ENCODE measurements at regions of chr3 and their contacts with region 1.

Region 1: DNA sequence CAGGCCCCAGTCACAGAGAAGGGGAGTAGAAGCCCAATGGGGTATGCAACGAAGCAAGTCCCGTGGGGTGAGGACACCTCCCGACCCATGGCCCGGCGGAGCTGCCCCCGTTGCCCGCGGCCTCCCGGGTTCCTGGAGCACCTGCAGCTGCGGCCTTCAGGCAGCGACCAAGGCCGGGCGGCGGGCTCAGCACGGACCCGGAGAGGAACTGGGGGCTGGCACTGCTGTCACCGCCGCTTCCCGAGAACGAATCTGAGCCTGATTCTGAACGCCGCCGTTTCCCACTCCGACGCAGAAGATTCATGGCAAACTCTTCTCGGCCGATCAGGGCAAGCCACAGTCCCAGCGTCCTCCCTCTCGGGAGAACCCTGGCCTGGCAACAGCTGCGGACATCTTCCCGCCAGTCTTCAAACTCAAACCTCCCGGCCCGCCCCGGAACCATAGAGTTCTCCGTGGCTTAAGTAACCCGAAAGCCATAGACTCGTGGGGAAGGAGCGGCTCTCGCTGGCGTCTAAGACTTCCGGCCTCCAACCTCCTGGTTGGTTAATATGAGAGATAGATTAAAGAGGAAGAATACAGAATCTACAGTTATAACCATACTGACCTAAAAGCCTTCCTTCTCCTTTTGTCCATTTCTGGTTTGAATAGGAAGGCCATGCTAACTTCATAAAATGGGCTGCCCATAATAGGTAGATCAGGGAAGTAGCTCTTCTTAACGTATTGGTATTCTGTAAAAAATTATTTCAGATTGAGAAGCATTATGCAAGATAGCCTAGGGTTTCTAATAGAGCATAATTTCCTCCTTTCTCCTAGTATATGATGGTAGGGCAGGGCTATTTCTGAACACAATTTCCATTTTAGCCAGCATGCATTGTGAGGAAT is at the start of gene POLQ:
- DNase-seq: peak; percentile 83
- ATAC-seq: peak; percentile 94
- H3K4me3 Mint-ChIP-seq: peak within 1 kb of the TSS; percentile 98
- H3K27ac Mint-ChIP-seq: peak within 1 kb of the TSS; percentile 94
- H3K4me1 Mint-ChIP-seq: peaks cover 20% of the 10 kb centered on the region
- H3K27me3 Mint-ChIP-seq: no peaks in the 10 kb centered on the region
- CTCF ChIP-seq: no peak
- total RNA-seq, gene POLQ: 14.9 to 16.8 TPM (median 16.2 TPM) in 3 replicates

Region 2: GRCh38 chr3:121431726-121432517 is 113.9 kb before region 1 on chr3:
- CTCF ChIA-PET with region 1: no interaction called
- POLR2A ChIA-PET with region 1: no interaction called
- DNase-seq: no peak
- ATAC-seq: no peak
- H3K4me3 Mint-ChIP-seq: no peak overlapping the region
- H3K27ac Mint-ChIP-seq: no peak overlapping the region
- H3K4me1 Mint-ChIP-seq: no peaks in the 10 kb centered on the region
- H3K27me3 Mint-ChIP-seq: no peaks in the 10 kb centered on the region
- CTCF ChIP-seq: no peak

Region 3: GRCh38 chr3:121592856-121593702 is 47.3 kb after region 1 on chr3 and contains the start of gene FBXO40:
- CTCF ChIA-PET with region 1: interaction called, 18 read pairs
- POLR2A ChIA-PET with region 1: interaction called, 3 read pairs
- DNase-seq: peak; percentile 88
- ATAC-seq: peak; percentile 96
- H3K4me3 Mint-ChIP-seq: peak within 1 kb of the TSS; percentile 45
- H3K27ac Mint-ChIP-seq: peak within 1 kb of the TSS; percentile 100
- H3K4me1 Mint-ChIP-seq: peaks cover 69% of the 10 kb centered on the region
- H3K27me3 Mint-ChIP-seq: no peaks in the 10 kb centered on the region
- CTCF ChIP-seq: no peak
- total RNA-seq, gene FBXO40: 0.04 to 0.09 TPM (median 0.07 TPM) in 3 replicates

Region 4: DNA sequence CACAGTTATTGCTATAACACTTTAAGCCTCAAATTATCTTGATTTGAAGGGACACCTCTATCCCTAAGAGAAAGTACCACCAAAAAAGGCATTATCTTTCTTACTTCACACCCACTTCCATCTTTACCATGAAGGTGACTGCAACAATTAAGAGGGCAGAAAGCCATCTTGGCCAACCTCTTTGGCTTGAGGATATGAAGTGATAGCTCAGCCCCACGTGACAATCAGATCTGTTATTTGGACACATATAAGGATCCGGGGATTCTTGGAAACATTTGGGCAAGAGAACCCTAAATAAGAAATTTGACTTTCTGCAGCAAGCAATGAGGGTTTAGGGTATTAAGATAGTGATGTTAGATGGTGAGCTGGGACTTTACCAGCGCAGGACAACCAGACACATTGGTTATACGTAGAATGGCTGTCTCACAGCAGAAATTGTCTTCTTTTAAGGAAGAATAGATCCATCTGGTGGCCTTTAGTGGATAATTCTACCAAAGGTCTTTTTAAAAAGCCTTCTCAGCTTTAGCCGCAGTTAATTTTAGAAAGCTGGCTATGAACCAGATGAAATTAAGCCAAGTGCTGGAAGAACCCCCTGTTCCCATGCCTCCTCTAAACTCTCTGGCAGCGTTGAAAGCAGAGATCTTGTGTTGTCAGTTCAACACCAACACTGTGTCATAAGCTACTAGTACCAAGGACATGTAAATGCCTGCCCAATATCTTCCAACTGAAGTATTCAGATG is 102.6 kb after region 1 on chr3:
- CTCF ChIA-PET with region 1: interaction called, 10 read pairs
- POLR2A ChIA-PET with region 1: no interaction called
- DNase-seq: no peak
- ATAC-seq: no peak
- H3K4me3 Mint-ChIP-seq: no peak overlapping the region
- H3K27ac Mint-ChIP-seq: no peak overlapping the region
- H3K4me1 Mint-ChIP-seq: peaks cover 11% of the 10 kb centered on the region
- H3K27me3 Mint-ChIP-seq: no peaks in the 10 kb centered on the region
- CTCF ChIP-seq: no peak

Region 5: DNA sequence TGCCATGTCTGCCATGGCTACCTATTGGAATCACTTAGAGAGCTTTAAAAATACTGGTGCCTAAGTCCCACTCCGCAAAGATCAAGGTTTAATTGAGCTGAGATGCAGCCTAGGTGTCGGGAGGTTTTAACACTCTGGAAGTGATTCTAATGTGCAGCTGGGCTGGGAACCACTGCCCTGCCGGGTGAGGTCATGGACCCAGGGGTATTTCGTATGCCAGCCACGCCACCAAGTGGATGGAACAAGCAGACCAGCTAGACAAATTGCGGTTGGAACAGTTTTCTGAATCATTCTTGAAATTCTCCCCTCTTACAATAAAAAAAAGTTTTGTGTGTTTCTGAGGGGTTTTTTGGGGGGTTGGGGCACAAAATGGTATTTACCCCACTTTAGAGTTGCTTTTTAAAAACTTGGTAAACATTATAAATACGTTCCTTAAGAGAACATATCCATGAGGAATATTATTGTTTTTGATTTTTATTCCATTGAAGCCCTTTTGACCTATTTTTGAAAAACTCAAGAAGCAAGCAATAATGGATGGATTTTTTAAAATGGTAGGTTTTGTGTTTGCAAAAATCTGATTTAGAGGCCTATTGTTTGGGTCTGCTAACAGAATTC is 713.0 kb after region 1 on chr3:
- CTCF ChIA-PET with region 1: interaction called, 12 read pairs
- POLR2A ChIA-PET with region 1: no interaction called
- DNase-seq: peak; percentile 71
- ATAC-seq: peak; percentile 92
- H3K4me3 Mint-ChIP-seq: no peak overlapping the region
- H3K27ac Mint-ChIP-seq: no peak overlapping the region
- H3K4me1 Mint-ChIP-seq: peaks cover 8% of the 10 kb centered on the region
- H3K27me3 Mint-ChIP-seq: no peaks in the 10 kb centered on the region
- CTCF ChIP-seq: no peak